ENCODE measurements at regions of chr6 and their contacts with region 1.

Region 1: GRCh38 chr6:73207221-73207837 is 18.0 kb downstream of the KHDC1L start:
- DNase-seq: no peak
- H3K4me3 ChIP-seq: no peak overlapping the region
- H3K27ac ChIP-seq: no peak overlapping the region
- H3K4me1 ChIP-seq: no peaks in the 10 kb centered on the region
- H3K27me3 ChIP-seq: no peaks in the 10 kb centered on the region
- CTCF ChIP-seq: no peak
- EP300 ChIP-seq: no peak
- POLR2A ChIP-seq: no peak

Region 2: GRCh38 chr6:73234732-73235131 is 27.4 kb after region 1 on chr6:
- intact Hi-C with region 1: loop called in 1 of 4 experiments (anchors 2 kb)
- DNase-seq: no peak
- H3K4me3 ChIP-seq: no peak overlapping the region
- H3K27ac ChIP-seq: no peak overlapping the region
- H3K4me1 ChIP-seq: no peaks in the 10 kb centered on the region
- H3K27me3 ChIP-seq: no peaks in the 10 kb centered on the region
- CTCF ChIP-seq: no peak
- EP300 ChIP-seq: no peak
- POLR2A ChIP-seq: no peak